Activated CD4-positive, alpha-beta T cell treated with anti-CD3 and anti-CD28 coated beads for 36 hours (primary cell): ENCODE measurements at regions of chrX and their contacts with region 1.

Region 1: DNA sequence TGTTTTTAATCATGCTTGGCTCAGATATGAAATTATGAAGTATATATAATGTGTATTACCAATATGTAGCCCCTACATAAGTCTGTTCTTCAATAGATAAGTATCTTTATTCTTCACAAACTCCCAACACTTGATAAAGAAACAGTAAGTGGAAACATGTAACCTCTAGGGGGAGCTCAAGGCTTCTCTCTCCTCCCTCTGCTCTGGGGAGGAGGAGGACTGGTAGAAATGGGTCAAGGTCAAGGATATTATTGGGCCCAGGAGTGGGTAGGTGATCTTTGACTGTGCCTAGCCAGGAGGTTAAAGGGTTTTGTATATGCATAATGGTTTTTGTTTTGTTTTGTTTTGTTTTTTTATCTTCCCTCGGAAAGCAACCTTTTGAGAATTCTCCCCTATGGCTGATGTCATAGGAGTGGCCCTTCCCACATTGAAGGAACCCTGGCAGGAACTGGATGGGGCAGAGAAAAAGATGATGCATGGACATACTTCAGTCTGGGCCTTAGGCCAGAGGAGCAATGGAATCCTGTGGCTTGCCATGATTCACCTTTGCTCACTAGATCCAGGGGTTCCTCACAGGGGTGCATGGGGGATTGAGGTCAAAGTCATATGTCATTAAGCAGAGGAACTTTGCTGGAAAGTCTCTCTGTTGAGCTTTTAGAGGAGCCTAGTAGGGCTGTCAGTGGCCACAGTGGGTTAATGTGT is 460.3 kb downstream of the MID1IP1 start:
- DNase-seq: peak; percentile 25
- ATAC-seq: peak; percentile 78
- H3K4me3 Mint-ChIP-seq: no peak overlapping the region
- H3K27ac Mint-ChIP-seq: peak overlapping the region; percentile 32
- H3K4me1 Mint-ChIP-seq: peaks cover 52% of the 10 kb centered on the region
- H3K27me3 Mint-ChIP-seq: no peaks in the 10 kb centered on the region

Region 2: GRCh38 chrX:39133971-39134370 is 127.6 kb before region 1 on chrX:
- CTCF ChIA-PET with region 1: no interaction called
- POLR2A ChIA-PET with region 1: no interaction called
- intact Hi-C with region 1: no loop called
- DNase-seq: peak; percentile 45
- ATAC-seq: peak; percentile 57
- H3K4me3 Mint-ChIP-seq: no peak overlapping the region
- H3K27ac Mint-ChIP-seq: no peak overlapping the region
- H3K4me1 Mint-ChIP-seq: peaks cover 2% of the 10 kb centered on the region
- H3K27me3 Mint-ChIP-seq: no peaks in the 10 kb centered on the region

Region 3: DNA sequence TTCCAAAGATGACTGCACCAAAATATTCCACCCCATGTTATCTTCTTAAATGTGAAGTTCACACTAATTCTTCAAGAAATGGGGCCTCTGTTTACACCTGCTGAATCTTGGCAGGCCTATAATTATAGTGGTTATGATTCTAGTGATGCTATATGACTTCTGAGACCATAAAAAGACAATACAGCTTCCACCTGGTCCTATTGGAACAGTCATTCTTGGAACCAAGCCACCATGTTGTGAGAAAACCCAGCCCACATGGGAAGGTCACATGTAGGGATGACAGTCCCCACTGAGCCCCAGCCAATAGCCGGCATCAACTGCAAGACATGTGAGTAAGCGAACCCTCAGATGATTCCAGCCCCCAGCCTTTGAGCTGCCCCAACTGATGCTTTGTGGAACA is 127.1 kb after region 1 on chrX:
- CTCF ChIA-PET with region 1: no interaction called
- POLR2A ChIA-PET with region 1: no interaction called
- intact Hi-C with region 1: no loop called
- DNase-seq: no peak
- ATAC-seq: no peak
- H3K4me3 Mint-ChIP-seq: no peak overlapping the region
- H3K27ac Mint-ChIP-seq: no peak overlapping the region
- H3K4me1 Mint-ChIP-seq: peaks cover 18% of the 10 kb centered on the region
- H3K27me3 Mint-ChIP-seq: no peaks in the 10 kb centered on the region

Region 4: GRCh38 chrX:39427906-39428305 is 166.3 kb after region 1 on chrX:
- CTCF ChIA-PET with region 1: no interaction called
- POLR2A ChIA-PET with region 1: no interaction called
- intact Hi-C with region 1: loop called (anchors 5 kb)
- DNase-seq: peak; percentile 73
- ATAC-seq: peak; percentile 71
- H3K4me3 Mint-ChIP-seq: no peak overlapping the region
- H3K27ac Mint-ChIP-seq: peak overlapping the region; percentile 82
- H3K4me1 Mint-ChIP-seq: peaks cover 73% of the 10 kb centered on the region
- H3K27me3 Mint-ChIP-seq: no peaks in the 10 kb centered on the region

Region 5: GRCh38 chrX:39439906-39440798 is 178.6 kb after region 1 on chrX:
- CTCF ChIA-PET with region 1: no interaction called
- POLR2A ChIA-PET with region 1: no interaction called
- intact Hi-C with region 1: loop called (anchors 2 to 5 kb)
- DNase-seq: peak; percentile 44
- ATAC-seq: peak; percentile 20
- H3K4me3 Mint-ChIP-seq: no peak overlapping the region
- H3K27ac Mint-ChIP-seq: peak overlapping the region; percentile 89
- H3K4me1 Mint-ChIP-seq: peaks cover 44% of the 10 kb centered on the region
- H3K27me3 Mint-ChIP-seq: no peaks in the 10 kb centered on the region

Region 6: DNA sequence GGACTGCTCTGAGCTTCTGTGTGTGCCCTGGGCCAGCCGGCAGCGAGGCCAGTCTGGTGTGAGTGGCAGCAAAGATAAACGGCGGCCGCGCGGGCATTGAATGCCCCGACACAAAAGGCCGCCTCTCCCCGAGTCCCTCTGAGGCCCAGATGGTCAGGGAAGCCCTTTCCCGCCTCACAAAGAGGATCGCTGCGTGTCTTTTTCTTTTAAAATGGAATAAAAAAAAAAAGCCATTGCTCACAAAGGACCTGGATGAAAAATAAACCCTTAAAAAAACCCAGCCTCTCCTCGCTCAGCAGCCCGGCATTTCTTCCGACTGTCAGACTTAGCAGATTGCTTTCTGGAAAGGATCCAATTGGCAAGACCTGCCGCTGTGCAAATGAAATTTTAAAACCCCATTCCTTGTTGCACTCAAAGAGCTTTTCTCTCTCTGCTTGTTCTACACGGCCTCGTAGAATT is 257.5 kb after region 1 on chrX:
- CTCF ChIA-PET with region 1: no interaction called
- POLR2A ChIA-PET with region 1: no interaction called
- intact Hi-C with region 1: no loop called
- DNase-seq: no peak
- ATAC-seq: no peak
- H3K4me3 Mint-ChIP-seq: no peak overlapping the region
- H3K27ac Mint-ChIP-seq: no peak overlapping the region
- H3K4me1 Mint-ChIP-seq: peaks cover 2% of the 10 kb centered on the region
- H3K27me3 Mint-ChIP-seq: no peaks in the 10 kb centered on the region